Activated CD4-positive, alpha-beta memory T cell treated with anti-CD3 and anti-CD28 coated beads for 36 hours (primary cell): ENCODE measurements at regions of chr3 and their contacts with region 1.

Region 1: DNA sequence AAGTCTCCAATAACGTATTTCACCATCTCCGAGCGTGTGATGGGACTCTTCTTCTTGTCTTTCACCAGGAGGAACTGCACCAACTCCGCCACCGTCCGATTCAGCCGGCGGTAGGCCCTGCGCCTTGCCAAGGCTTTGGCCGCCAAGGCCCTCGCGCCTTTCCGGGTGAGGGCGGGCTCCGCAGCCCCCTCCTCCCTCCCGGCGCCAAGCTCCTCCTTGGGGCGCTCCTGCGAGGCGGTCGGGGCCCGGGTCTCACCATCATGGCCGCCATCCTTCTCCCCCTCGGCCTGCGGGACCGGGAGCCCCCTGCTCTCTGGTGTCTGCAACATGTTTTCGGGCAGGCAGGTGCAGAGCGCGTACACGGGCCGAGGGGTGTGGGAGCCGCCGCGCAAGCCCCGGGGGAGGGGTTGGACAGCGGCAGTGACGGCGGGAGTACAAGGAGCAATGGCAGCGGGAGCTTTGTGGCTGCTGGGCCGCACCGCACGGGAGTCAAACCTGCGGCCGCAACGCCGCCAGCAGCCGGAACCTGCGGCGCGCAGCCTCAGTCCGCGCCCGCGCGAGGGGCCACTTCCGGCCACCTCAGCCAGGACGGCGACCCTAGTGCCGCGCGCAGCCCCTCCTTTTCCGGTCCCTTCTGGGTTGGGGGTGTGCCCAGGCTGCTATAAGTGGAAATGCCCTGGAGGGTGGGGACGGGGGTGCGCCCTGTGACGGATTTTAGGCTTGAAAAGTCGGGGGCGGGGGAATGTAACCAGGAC is at the start of gene MAGEF1:
- DNase-seq: peak; percentile 87
- H3K4me3 Mint-ChIP-seq: peak within 1 kb of the TSS; percentile 92
- H3K27ac Mint-ChIP-seq: peak within 1 kb of the TSS; percentile 91
- H3K4me1 Mint-ChIP-seq: peaks cover 39% of the 10 kb centered on the region
- H3K27me3 Mint-ChIP-seq: no peaks in the 10 kb centered on the region
- total RNA-seq, gene MAGEF1: 20.6 to 22.5 TPM

Region 2: GRCh38 chr3:184656829-184657681 is 54.6 kb before region 1 on chr3:
- CTCF ChIA-PET with region 1: no interaction called
- POLR2A ChIA-PET with region 1: no interaction called
- intact Hi-C with region 1: loop called (anchors 2 kb)
- DNase-seq: peak; percentile 80
- H3K4me3 Mint-ChIP-seq: no peak overlapping the region
- H3K27ac Mint-ChIP-seq: peak overlapping the region; percentile 31
- H3K4me1 Mint-ChIP-seq: peaks cover 18% of the 10 kb centered on the region
- H3K27me3 Mint-ChIP-seq: no peaks in the 10 kb centered on the region